Tibial artery (tissue), 4 donors: ENCODE measurements at regions of chr9 and their contacts with region 1.

Region 1: GRCh38 chr9:121770415-121771273 is 119.2 kb downstream of the DAB2IP start:
- DNase-seq: no peak
- H3K4me3 ChIP-seq: no peak overlapping the region
- H3K27ac ChIP-seq: peak overlapping the region; percentile 78 to 80
- H3K4me1 ChIP-seq: peaks cover 0 to 71% (median 49%) of the 10 kb centered on the region in 4 donors
- H3K27me3 ChIP-seq: no peaks in the 10 kb centered on the region
- CTCF ChIP-seq: no peak

Region 2: DNA sequence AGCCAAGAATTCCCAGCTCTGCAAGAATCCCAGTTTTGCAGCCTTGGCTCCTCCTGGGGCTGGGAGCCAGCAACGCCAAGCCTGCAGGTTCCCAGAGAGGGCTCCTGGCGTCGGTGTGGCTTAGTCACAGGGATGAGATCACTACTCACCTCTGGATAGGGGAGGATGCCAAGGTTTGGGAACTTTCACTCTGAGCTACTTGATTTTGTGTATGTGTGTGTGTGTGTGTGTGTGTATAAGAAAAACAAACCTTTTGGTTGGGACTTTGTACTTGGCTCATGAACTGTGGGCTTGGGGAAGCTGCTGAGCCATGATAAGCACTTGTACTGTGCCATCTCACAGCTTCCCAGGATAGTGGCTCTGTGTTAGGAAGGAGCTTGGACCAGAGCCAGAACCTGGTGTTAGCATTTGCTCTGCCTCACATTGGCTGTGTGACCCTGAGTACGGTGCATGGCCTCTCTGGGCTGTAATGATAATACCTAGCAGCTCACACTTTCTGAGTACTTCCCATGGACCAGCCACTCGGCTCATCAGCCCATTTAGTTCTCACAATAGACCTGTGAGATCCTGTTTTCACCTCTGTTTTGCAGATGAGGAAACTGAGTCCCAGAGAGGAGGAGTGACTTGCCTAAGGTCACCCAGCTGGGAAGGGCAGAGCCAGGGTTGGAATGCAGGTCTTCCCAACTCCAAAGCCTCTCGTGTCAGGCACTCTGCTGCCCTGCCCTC is 160.6 kb before region 1 on chr9:
- intact Hi-C with region 1: loop called (anchors 10 kb)
- DNase-seq: peak; percentile 43 to 79
- H3K4me3 ChIP-seq: no peak overlapping the region
- H3K27ac ChIP-seq: peak overlapping the region; percentile 16 to 33
- H3K4me1 ChIP-seq: peaks cover 0 to 66% (median 42%) of the 10 kb centered on the region in 4 donors
- H3K27me3 ChIP-seq: no peaks in the 10 kb centered on the region
- CTCF ChIP-seq: no peak

Region 3: DNA sequence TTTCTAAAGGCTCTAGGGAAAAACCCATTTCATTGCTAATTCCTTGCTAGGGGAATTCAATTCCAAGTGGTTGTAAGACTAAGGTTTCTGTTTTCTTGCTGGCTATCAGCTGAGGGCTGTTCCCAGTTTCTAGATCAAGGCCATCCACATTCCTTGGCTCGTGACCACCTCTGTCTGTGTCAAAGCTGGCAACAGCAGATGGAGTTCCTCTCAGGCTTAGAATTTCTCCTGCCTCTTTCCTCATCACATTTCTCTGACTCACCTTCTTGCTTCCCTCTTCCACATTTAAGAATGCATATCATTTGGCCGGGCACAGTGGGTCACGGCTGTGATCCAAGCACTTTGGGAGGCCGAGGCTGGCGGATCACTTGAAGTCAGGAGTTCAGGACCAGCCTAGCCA is 100.2 kb before region 1 on chr9:
- intact Hi-C with region 1: no loop called
- DNase-seq: peak; percentile 79 to 82
- H3K4me3 ChIP-seq: no peak overlapping the region
- H3K27ac ChIP-seq: no peak overlapping the region
- H3K4me1 ChIP-seq: peaks cover 0 to 19% (median 0%) of the 10 kb centered on the region in 4 donors
- H3K27me3 ChIP-seq: no peaks in the 10 kb centered on the region
- CTCF ChIP-seq: no peak

Region 4: GRCh38 chr9:122075135-122076030 is 304.7 kb after region 1 on chr9:
- intact Hi-C with region 1: no loop called
- DNase-seq: peak in 1 of 2 donors; percentile 35
- H3K4me3 ChIP-seq: peak overlapping the region; percentile 11 to 24
- H3K27ac ChIP-seq: peak overlapping the region; percentile 79 to 89
- H3K4me1 ChIP-seq: peaks cover 0 to 82% (median 27%) of the 10 kb centered on the region in 4 donors
- H3K27me3 ChIP-seq: no peaks in the 10 kb centered on the region
- CTCF ChIP-seq: no peak